T-cell (primary cell): ENCODE measurements at regions of chr19 and their contacts with region 1.

Region 1: DNA sequence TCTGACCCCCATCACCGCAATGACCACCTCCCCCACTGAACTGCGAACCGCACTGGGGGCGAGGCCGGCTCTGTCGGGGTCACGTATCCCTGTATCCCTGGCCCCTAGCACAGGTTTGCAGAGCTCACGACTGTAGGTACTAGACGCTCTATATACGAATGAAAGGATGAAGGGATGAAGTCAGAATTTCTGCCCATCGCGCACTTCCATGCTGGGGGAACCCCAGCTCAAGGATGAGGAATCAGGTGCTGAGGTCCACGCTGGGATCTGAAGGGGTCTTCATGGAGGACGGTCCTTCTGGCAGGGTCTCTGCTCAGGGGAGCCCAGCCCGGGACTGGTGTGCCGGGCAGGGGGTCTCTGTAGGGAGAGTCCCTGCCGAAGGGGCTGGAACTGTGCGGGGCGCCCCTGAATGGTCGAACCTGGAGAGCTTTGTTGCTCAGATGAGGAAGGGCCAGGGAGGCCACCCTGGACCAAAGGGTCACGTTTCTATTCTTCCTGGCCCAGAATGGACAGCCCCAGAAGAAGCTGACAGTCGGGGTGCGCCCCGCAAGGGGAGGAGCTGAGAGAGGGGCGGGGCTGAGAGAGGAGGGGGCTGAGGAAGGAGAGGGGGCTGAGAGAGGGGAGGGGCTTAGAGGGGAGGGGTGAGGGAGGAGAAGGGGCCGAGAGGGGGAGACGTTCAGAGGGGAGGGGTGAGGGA is 37.9 kb upstream of the SEMA6B start:
- DNase-seq: peak in 9 of 35 experiments; percentile 3 to 34 (median 18)
- ATAC-seq: no peak
- H3K4me3 ChIP-seq: no peak overlapping the region
- H3K4me3 Mint-ChIP-seq: peak overlapping the region; percentile 34 to 73 (median 37)
- H3K27ac ChIP-seq: no peak overlapping the region
- H3K27ac Mint-ChIP-seq: no peak overlapping the region
- H3K4me1 ChIP-seq: peaks cover 2 to 19% of the 10 kb centered on the region in 2 experiments
- H3K4me1 Mint-ChIP-seq: peaks cover 9 to 12% (median 11%) of the 10 kb centered on the region in 3 donors
- H3K27me3 ChIP-seq: peaks cover 2 to 82% of the 10 kb centered on the region in 2 experiments
- H3K27me3 Mint-ChIP-seq: peaks cover 24 to 56% of the 10 kb centered on the region in 2 donors

Region 2: DNA sequence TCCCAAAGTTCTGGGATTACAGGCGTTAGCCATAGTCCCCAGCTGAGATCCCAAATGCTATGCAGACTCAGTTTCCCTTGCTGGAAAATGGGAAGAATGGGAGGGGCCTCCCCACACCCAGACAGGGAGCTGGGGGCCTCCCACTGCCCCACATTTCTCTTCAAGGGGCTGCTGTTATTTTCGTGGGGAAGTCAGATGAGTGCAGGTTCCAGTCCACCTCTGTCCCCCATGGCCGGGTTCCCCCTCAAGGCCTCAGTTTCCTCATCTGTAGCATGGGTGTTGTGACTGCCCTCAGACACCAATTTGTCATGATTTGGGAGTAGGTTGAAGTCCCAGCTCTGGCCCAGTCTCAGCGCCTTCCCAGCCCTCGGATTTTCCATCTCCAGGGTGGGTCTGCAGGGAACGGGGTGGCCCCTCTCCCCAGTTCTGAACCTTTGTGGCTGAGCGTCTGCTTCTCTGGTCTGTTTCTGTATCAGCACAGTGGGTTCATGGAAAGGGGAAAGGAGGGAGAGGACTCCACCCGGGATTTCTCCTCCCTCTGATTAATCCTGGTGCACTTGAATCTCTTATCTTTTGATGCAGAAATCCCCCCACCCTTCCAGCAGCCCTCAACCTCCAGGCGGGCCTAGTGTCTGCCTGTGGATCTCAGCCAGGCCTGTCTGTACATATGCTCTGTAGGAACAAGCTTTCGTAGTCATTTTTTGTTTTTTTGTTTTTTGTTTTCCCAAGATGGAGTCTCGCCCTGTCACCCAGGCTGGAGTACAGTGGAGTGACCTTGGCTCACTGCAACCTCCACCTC is 1218.9 kb before region 1 on chr19:
- CTCF ChIA-PET with region 1: interaction called in 1 of 2 experiments, 11 read pairs
- POLR2A ChIA-PET with region 1: no interaction called
- DNase-seq: no peak
- ATAC-seq: no peak
- H3K4me3 ChIP-seq: no peak overlapping the region
- H3K4me3 Mint-ChIP-seq: no peak overlapping the region
- H3K27ac ChIP-seq: no peak overlapping the region
- H3K27ac Mint-ChIP-seq: no peak overlapping the region
- H3K4me1 ChIP-seq: peaks cover 0 to 2% of the 10 kb centered on the region in 2 experiments
- H3K4me1 Mint-ChIP-seq: peaks cover 9 to 13% (median 13%) of the 10 kb centered on the region in 3 donors
- H3K27me3 ChIP-seq: no peaks in the 10 kb centered on the region
- H3K27me3 Mint-ChIP-seq: no peaks in the 10 kb centered on the region

Region 3: DNA sequence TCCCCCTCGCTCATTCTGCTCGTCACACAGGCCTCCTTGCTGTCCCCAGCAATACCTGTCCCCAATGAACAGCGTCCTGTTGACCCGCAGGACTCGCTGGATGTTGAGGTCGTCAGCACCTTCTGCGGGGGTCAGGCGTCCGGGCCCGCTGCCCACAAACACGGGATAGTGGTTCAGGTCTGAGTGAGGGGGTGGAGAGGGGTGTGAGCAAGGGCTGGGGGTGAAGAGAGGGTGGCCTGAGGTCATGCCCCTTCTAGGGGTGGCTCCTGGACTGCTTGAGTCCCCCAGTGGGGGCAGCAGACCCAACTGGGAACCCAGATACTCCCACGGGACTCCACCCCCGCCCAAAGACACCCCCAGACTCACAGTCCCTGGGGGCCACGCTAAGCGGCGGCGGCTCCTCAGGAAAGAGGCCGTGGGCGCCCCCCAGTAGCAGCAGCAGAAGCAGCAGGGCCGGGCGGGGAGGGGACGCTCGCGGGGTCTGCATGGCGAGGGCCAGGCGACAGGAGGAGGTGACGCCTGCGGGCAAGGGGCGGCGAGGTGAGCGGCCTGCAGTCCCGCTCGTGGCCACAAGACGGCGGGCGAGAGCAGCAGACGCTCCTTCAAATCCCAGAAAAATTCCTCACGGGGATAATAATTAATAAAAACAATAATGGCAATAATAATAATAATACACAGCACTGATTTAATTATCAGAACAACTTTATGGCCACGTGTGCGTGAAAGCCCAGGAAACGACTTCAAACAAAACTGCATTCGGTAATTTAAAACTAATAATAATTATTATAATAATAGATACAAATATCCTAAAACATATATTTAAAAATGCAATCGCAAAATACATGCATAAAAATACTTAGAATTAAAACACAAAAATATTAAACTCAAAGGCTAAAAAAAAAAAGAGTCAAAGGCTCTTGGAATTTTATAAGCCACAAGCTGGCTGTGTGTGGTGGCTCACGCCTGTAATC is 39.2 kb before region 1 on chr19:
- CTCF ChIA-PET with region 1: interaction called in 1 of 2 experiments, 10 read pairs
- POLR2A ChIA-PET with region 1: interaction called in 1 of 2 experiments, 4 read pairs
- DNase-seq: peak in 12 of 35 experiments; percentile 14 to 61 (median 25)
- ATAC-seq: no peak
- H3K4me3 ChIP-seq: no peak overlapping the region
- H3K4me3 Mint-ChIP-seq: no peak overlapping the region
- H3K27ac ChIP-seq: no peak overlapping the region
- H3K27ac Mint-ChIP-seq: no peak overlapping the region
- H3K4me1 ChIP-seq: peaks cover 0 to 4% of the 10 kb centered on the region in 2 experiments
- H3K4me1 Mint-ChIP-seq: no peaks in the 10 kb centered on the region
- H3K27me3 ChIP-seq: peaks cover 0 to 27% of the 10 kb centered on the region in 2 experiments
- H3K27me3 Mint-ChIP-seq: peaks cover 4 to 8% of the 10 kb centered on the region in 2 donors

Region 4: DNA sequence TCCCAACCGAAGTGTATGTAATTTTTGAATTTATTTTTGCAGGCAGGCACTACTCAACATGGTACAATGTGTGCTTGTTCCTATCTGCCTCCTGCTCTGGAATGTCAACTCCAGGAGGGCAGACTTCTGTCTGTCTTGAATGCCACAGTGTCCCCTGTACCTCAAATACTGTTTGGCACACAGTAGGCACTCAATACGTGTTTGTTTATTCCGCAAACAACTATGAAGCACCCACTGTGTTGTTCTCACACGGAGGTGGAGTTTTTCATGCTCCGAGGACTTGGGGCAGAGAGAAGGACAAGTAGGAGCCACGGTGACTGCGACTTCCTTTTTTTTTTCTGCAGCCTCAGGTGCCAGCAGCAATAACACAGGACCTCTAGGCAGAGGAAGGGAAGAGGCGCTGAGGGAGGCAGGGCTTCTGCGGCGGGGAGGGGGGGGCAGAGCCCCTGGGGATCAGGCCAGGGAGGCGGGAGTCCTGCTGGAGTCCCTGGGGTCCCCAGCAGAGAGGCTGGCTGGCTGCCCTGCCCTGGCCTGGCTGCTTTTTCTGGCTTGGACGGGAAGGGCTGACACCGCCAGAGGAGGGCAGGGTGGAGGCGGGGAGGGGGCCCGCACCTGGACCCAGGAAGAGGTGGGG is 12.6 kb after region 1 on chr19:
- CTCF ChIA-PET with region 1: interaction called, 3 to 10 read pairs
- POLR2A ChIA-PET with region 1: no interaction called
- DNase-seq: no peak
- ATAC-seq: no peak
- H3K4me3 ChIP-seq: no peak overlapping the region
- H3K4me3 Mint-ChIP-seq: no peak overlapping the region
- H3K27ac ChIP-seq: no peak overlapping the region
- H3K27ac Mint-ChIP-seq: no peak overlapping the region
- H3K4me1 ChIP-seq: no peaks in the 10 kb centered on the region
- H3K4me1 Mint-ChIP-seq: no peaks in the 10 kb centered on the region
- H3K27me3 ChIP-seq: peaks cover 0 to 55% of the 10 kb centered on the region in 2 experiments
- H3K27me3 Mint-ChIP-seq: peaks cover 23 to 33% of the 10 kb centered on the region in 2 donors